Ascending aorta (tissue), 2 donors: ENCODE measurements at regions of chr1 and their contacts with region 1.

Region 1: DNA sequence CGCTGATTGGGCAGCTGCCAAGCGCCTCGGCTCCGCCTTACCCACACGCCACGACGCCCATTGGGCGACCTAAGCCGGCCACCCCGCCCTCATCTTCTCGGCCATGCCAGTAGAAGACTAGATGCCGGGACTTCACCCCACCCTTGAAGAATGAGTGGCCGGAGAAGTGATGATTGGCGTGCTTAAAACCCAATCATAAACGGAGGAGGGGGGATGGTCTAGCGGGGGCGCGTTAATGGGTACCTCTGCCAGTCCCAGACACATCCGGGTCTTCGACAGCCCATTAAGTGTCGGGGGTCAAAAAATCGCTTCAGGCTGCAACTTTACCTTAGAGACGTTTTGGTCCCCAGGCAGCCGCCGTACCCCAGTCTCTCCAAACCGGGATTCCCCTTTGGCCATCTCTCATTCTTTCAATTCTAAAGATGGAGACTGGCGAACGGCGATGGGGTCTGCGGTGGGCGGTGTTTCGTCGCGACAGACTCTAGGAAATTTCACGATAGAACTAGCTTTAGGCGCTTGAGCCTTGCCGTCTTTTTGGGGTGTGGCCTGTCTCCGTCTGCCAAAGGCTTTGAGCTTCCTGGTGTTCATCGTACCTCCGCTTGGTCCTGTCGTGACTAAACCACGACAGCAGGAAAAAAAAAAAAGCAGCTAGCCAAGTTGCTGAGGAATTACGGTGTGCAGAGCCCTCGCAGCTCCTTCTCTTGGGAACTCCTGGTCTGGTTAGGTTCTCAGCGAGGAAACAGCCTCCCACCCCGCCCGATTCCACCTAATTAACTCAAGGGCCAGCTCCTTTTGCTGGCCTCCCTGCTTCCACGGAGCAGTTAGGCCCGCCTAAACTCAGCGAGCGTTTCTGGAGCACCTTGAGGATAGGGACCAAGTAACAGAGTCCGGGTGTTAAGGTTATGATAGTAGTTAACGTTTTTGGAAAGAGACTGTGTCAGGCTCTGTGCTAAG is at the start of gene GATAD2B:
- DNase-seq: peak; percentile 99 to 100
- H3K4me3 ChIP-seq: peak within 1 kb of the TSS; percentile 72 to 86
- H3K27ac ChIP-seq: peak within 1 kb of the TSS; percentile 88 to 97
- H3K4me1 ChIP-seq: peaks cover 6 to 24% of the 10 kb centered on the region in 2 donors
- H3K27me3 ChIP-seq: no peaks in the 10 kb centered on the region
- CTCF ChIP-seq: no peak
- total RNA-seq, gene GATAD2B: 9.5 TPM

Region 2: DNA sequence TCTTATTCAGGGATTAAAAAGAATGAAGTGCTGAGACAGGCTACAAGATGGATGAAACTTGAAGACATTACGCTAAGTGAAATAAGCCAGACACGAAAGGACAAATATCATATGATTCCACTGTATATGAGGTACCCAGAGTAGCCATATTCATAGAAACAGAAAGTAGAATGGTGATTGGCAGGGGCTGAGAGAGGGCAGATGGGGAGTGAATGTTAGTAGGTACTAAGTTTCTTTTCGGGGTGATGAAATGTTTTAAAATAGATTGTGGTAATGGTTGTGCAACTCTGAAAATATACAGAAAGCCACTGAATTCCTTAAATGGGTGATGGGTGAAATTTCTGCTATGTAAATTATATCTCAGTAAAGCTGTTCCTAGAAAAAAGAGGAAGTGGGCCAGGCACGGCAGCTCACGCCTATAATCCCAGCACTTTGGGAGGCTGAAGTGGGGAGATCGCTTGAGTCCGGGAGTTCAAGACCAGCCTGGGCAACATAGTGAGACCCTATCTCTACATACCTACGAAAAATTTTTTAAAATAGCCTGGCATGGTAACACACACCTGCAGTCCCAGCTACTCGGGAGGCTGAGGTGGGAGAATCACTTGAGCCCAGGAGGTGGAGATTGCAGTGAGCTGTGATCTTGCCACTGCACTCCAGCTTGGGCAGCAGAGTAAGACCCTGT is 132.1 kb before region 1 on chr1:
- intact Hi-C with region 1: loop called (anchors 2 kb)
- DNase-seq: no peak
- H3K4me3 ChIP-seq: peak overlapping the region; percentile 38 to 60
- H3K27ac ChIP-seq: peak overlapping the region; percentile 96
- H3K4me1 ChIP-seq: peaks cover 0 to 15% of the 10 kb centered on the region in 2 donors
- H3K27me3 ChIP-seq: no peaks in the 10 kb centered on the region
- CTCF ChIP-seq: no peak

Region 3: DNA sequence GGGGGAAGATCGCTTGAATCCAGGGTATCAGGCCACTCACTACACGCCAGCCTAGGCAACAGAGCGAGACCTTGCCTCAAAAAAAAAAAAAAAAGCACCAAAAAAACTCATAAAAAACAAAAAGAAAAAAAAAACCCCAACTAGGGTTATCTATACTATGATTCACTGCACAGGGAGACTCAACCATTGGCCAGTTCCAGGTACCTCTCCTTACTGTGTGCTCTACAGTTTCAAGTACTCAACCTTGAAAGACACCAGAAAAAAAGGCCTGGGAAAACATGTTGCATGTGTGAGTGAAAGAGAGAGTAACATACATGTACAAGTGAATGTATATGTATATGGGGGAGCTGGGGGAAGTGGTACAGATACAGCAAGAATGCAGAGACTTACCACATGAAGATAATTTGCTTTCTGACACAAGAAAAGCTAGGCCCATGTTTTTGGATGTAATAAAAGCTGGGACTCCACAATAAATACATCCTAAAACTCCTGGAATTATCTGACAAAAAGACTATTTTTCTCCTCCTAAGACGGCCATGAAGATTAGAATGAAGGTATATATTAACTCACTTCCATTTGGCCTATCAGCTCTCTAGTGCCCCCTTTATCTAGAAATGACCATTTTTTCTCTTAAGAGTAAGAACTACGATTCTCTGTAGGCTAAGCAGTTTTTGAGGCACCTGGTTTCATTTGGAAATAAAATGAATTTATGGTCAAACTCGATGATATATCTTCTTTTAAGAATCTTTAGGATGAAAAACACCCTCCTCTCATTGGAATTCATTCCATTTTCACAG is 95.9 kb before region 1 on chr1:
- intact Hi-C with region 1: loop called (anchors 5 kb)
- DNase-seq: no peak
- H3K4me3 ChIP-seq: no peak overlapping the region
- H3K27ac ChIP-seq: no peak overlapping the region
- H3K4me1 ChIP-seq: no peaks in the 10 kb centered on the region
- H3K27me3 ChIP-seq: no peaks in the 10 kb centered on the region
- CTCF ChIP-seq: no peak

Region 4: DNA sequence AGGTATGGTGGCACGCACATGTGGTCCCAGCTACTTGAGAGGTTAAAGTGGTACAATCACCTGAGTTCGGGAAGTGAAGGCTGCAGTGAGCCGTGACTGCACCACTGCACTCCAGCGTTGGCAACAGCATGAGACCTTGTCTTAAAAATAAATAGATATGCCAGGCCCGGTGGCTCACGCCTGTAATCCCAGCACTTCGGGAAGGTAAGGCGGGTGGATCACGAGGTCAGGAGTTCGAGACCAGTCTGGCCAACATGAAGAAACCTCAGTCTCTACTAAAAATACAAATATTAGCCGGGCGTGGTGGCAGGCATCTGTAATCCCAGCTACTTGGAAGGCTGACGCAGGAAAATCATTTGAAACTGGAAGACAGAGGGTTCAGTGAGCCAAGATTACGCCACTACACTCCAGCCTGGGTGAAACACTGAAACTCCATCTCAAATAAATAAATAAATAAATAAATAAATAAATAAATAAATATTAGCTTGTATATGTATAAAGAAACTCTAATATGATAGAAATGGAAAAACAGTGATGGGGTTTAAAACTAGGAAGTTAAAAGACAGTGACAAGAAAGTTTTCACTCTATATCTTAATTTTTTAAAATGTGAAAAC is 19.3 kb before region 1 on chr1:
- intact Hi-C with region 1: loop called (anchors 1 kb)
- DNase-seq: peak in 1 of 2 donors; percentile 63
- H3K4me3 ChIP-seq: no peak overlapping the region
- H3K27ac ChIP-seq: peak overlapping the region; percentile 73 to 82
- H3K4me1 ChIP-seq: peaks cover 3 to 19% of the 10 kb centered on the region in 2 donors
- H3K27me3 ChIP-seq: no peaks in the 10 kb centered on the region
- CTCF ChIP-seq: no peak

Region 5: DNA sequence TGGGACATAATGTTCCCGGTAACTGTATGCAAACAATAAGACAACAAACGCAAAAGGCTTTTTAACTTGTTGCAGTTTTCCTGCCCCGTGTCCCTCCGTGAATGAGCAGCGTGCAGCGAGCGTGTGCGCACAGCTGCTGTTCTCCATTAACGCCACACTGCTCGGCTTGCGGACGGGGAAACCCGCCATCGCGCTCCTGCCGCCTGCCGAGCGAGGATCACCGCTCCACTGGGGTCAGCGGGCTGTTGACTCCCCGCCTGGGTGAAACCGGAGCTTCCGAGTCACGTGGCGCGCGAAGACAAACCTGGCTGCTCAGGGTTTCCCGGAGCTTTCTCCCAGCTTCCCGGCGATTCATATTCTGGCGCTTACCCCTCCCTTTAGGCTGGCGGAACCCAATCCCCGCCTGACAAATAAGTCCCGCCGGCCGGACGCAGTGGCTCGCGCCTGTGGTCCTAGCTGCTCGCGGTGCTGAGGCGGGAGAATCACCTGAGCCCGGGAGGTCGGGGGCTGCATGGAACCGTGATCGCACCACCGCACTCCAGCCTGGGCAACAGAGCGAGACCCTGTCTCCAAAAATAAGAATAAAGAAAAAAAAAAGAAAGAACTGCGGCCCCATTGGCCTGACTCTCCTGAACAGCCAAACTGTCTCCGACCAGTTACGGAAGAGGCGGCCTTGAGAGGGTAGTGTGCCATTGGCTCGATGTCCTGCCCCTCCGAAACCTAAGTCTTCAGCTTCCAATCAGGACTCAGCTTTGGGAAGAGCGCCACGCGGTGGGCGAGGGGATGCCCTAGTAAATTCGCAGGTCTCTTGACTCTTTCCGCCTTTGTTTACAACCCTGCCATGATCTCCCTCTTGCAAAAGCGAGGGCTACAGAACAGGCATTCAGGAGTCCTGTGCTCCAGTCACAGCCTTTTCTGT is 44.1 kb after region 1 on chr1 and contains the start of gene CREB3L4:
- intact Hi-C with region 1: loop called (anchors 5 kb)
- DNase-seq: peak; percentile 73 to 96
- H3K4me3 ChIP-seq: peak within 1 kb of the TSS; percentile 62 to 69
- H3K27ac ChIP-seq: peak within 1 kb of the TSS; percentile 80 to 85
- H3K4me1 ChIP-seq: peaks cover 9 to 20% of the 10 kb centered on the region in 2 donors
- H3K27me3 ChIP-seq: no peaks in the 10 kb centered on the region
- CTCF ChIP-seq: peak; percentile 6 to 43 (median 43)
- total RNA-seq, gene CREB3L4: 6.3 TPM